Cardiac septum (tissue), 1 donor: ENCODE measurements at regions of chr16 and their contacts with region 1.

Region 1: DNA sequence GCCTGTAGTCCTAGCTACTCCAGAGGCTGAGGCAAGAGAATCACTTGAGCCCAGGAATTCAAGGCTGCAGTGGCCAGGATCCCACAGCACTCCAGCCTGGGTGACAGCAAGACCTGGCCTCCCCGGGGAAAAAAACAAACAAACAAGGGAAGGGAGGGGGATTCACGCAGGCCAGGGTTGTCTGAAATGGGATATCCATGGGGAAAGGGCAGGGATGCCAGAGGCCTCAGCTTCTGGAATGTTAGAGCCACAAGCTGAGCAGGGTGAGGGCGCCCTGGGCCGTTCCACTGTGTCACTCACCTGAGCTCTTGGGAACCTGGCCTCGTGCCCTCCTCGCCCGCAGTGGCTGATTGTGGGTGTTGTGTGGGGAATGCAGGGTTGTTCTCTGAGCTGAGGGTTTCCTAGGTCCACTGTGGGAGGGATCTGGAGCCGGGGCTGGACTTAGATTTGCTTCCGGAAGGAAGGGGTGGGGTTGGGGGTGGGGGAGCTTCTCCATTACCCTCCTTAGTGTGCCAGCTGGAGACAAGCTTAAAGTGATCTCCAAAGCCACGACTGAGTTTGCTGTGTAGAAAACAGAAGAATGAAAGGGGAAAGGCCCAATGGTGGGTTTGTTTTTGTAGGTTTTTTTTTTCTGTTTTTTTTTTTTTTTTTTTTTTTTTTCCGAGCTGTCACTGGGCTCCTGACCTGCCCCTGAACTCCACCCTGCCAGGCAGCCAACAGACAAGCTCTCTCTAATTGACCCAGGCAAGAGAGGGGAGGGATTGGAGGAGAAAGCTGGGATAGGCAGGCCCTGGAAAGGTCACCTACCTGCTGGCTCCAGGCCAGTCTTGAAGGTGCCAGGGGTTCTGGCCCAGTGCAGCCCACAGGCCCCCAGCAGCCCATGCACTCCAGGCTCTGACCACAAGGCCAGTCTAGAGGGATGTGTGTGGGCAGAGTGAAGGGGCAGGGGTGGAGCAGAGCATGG is at the start of gene SULT1A1:
- DNase-seq: peak; percentile 83
- total RNA-seq, gene SULT1A1: 23.2 TPM

Region 2: GRCh38 chr16:28553776-28554633 is 55.9 kb before region 1 on chr16 and contains the start of gene SGF29:
- intact Hi-C with region 1: loop called (anchors 10 kb)
- DNase-seq: peak; percentile 96
- total RNA-seq, gene SGF29: 14.0 TPM

Region 3: DNA sequence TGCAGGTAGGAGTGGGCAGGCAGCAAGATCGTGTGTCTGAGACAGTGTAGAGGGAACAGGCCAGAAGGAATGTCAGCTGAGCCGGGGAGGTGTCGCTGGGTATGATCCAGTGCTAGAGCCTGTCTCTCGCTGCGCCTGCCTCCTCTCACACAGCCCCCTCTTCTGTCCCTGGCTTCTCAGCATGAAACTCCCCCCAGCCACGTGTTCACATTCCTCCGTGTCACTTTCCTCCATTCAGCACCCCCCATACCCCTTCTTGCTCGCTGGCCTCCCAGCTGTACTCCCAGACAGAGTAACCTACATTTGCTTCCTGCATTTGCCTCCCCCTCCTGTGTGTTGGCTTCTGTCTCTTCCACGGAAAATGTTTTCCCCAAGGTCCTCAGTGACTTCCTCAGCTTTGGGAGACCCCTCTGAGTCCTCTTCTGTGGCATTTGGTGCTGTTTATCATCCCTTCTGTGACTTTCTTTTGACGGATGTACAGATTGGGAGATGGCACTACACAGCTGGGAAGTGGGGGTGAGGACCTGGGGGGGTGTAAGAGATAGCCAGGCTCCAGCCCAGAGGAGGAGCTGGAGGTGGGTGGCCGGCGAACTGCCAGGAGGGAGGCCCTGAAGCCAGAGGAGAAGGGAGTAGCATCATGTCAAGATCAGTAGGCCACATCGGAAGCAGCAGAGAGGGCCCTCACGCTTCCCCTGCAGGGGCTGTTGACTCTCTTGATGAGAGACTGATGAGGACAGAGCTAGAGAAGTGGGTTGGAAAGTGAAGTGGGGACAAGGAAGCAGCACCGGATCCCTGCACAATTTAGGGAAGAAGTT is 37.0 kb before region 1 on chr16:
- intact Hi-C with region 1: no loop called
- DNase-seq: peak; percentile 83

Region 4: DNA sequence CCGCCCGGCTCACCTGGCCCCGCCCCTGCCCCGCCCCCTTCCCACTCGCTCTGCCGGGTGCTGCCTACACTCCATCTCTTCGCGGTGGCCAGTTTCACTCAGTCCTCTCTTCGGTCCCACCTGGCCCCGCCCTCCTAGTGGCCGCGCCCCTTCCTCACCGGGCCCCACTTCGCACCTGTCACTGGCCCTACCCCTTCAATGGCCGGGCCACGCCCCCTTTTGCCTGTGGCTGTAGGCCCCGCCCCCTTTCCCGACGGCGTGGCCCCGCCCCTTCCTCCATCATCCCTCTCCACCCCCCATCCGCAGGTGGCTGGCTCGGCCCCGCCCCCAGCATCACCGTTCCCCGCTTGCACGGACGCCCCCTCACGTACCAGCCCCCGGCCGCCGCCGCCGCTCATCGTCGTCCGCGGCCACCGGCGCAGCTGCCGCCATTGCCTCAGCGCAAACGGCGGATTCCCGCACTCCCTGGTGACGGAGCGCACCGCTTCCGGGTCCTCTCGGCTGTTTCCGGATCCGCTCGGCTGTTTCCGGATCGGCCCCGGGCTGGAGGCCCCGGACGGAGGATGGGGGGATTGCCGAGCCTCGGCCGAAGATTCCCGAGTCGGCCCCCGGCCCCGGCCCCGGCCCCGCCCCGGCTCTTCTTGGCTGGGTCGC is 314.9 kb after region 1 on chr16 and contains the start of gene RABEP2:
- intact Hi-C with region 1: no loop called
- DNase-seq: peak; percentile 94
- total RNA-seq, gene RABEP2: 14.3 TPM